Left ventricle myocardium inferior (tissue), 1 donor: ENCODE measurements at regions of chr11 and their contacts with region 1.

Region 1: DNA sequence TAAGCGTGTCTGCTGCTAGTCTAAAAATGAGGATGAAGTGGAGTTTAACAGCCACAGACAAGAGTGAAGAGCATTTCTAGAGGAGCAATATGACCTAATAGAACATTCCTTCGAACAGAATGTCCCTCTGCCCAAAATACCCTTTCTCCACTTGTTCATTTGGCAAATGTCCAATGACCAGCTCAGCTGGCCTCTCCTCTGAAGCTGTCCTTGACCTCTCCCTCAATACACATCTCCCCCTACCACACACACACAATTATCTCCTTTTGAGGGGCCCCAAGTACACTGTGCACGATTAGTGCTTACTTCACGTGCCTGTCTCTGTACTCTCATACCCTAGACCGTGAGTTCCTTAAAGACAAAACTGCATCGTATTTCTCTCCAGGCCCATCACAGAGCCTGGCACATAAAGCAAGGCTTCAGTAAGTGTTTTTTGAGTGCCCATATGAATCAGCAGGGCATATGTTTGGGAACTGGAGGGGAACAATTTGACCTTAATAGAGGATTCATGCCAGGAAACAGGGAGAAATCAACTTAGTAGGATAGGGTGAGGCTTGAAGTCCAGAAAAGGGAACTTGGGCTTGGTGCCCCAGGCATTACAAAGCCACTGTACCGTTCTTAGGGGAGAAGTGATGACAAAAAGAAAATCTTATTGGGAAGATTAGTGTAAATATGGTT is 18.1 kb upstream of the NCAM1 start:
- DNase-seq: no peak
- H3K4me3 ChIP-seq: no peak overlapping the region
- H3K27ac ChIP-seq: peak overlapping the region; percentile 82
- H3K4me1 ChIP-seq: peaks cover 34% of the 10 kb centered on the region
- H3K27me3 ChIP-seq: no peaks in the 10 kb centered on the region
- CTCF ChIP-seq: no peak

Region 2: DNA sequence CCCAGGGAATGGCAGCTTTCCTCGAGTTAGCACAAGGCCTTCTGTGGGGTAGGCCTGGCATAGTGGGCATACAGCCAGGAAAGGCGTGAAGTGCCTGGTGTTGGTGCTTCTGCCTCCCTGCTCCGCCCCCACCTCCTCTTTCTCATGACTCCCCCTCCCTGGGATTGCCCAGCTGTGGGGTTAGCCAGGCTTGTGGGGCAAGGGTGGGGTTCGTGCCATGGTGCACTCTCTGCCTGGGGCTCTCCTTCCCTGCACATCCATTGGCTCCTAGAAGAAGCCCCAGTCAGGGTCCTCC is 218.7 kb before region 1 on chr11:
- intact Hi-C with region 1: no loop called
- DNase-seq: no peak
- H3K4me3 ChIP-seq: no peak overlapping the region
- H3K27ac ChIP-seq: no peak overlapping the region
- H3K4me1 ChIP-seq: no peaks in the 10 kb centered on the region
- H3K27me3 ChIP-seq: peaks cover 7% of the 10 kb centered on the region
- CTCF ChIP-seq: no peak

Region 3: DNA sequence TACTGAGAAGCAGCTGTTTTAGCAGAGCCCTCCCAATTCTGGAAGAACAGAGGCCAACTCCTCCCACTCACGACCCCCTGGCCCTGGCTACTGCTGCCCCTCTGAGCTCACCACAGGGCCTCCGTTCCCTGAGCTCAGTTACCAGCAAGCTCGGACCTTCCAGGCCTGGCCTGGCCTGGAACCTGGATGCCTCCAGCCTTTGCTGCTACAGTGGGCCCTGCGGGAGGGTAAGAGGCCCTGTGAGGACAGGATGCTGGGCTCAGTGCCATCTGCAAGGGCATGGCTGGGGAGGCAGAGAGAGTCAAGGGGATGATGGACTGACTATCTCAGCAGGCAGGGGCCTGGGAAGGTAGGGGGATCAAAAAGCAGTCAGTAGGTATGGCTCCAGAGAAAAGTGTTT is 191.8 kb before region 1 on chr11:
- intact Hi-C with region 1: no loop called
- DNase-seq: peak; percentile 48
- H3K4me3 ChIP-seq: no peak overlapping the region
- H3K27ac ChIP-seq: peak overlapping the region; percentile 27
- H3K4me1 ChIP-seq: peaks cover 11% of the 10 kb centered on the region
- H3K27me3 ChIP-seq: peaks cover 6% of the 10 kb centered on the region
- CTCF ChIP-seq: no peak

Region 4: GRCh38 chr11:112795142-112795815 is 147.8 kb before region 1 on chr11:
- intact Hi-C with region 1: no loop called
- DNase-seq: no peak
- H3K4me3 ChIP-seq: no peak overlapping the region
- H3K27ac ChIP-seq: peak overlapping the region; percentile 16
- H3K4me1 ChIP-seq: peaks cover 38% of the 10 kb centered on the region
- H3K27me3 ChIP-seq: no peaks in the 10 kb centered on the region
- CTCF ChIP-seq: peak; percentile 65

Region 5: DNA sequence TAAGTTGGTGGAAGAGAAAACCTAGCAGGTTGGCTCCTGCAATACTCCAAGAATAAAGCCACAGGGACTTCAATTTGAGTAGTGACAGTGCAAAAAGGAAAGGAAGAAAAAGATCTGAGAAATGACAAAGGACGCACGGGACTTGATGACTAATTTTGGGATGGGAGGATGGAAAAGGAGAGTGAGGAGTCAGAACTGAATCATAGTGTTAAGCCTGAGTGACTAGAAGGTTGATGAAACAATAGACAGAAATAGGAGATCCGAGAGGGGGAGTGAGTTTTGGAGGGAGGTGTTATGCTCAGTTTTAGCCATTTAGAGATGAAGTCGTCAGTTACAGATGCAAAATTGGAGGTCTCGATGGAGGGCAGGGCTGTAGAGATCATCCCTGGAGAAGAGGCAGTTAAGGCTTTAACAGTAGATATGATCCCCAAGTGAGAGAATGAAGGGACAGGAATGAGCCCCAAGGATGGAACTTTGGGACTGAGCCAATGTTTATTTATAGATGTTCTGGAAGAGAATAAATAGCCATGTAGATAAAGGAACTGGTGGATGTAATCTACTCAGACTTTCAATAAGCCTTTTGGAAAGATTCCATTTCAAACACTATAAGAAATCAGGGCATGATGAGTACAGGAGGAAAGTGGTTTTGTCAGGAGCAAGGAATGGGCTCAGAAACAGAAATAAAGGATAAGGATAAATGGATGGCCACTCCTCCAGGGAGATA is 90.8 kb before region 1 on chr11:
- intact Hi-C with region 1: loop called (anchors 10 kb)
- DNase-seq: no peak
- H3K4me3 ChIP-seq: no peak overlapping the region
- H3K27ac ChIP-seq: peak overlapping the region; percentile 68
- H3K4me1 ChIP-seq: peaks cover 23% of the 10 kb centered on the region
- H3K27me3 ChIP-seq: no peaks in the 10 kb centered on the region
- CTCF ChIP-seq: no peak

Region 6: GRCh38 chr11:112878033-112878622 is 65.0 kb before region 1 on chr11:
- intact Hi-C with region 1: no loop called
- DNase-seq: no peak
- H3K4me3 ChIP-seq: no peak overlapping the region
- H3K27ac ChIP-seq: no peak overlapping the region
- H3K4me1 ChIP-seq: peaks cover 12% of the 10 kb centered on the region
- H3K27me3 ChIP-seq: no peaks in the 10 kb centered on the region
- CTCF ChIP-seq: no peak